ENCODE measurements at regions of chr6 and their contacts with region 1.

Region 1: GRCh38 chr6:73520688-73521350 is at the start of gene EEF1A1:
- DNase-seq: peak; percentile 98
- ATAC-seq: peak; percentile 79
- H3K4me3 ChIP-seq: peak within 1 kb of the TSS; percentile 78 to 100 (median 97)
- H3K27ac ChIP-seq: peak within 1 kb of the TSS; percentile 100
- H3K4me1 ChIP-seq: peaks cover 46% of the 10 kb centered on the region
- H3K27me3 ChIP-seq: no peaks in the 10 kb centered on the region; a peak in 1 of 5 replicates
- CTCF ChIP-seq: peak; percentile 35
- EP300 ChIP-seq: peak in 1 of 2 experiments; percentile 36; a peak in 1 of 4 replicates
- POLR2A ChIP-seq: peak; percentile 100
- RAD21 ChIP-seq: no peak
- total RNA-seq, gene EEF1A1: 13,726 and 19,145 TPM in 2 replicates

Region 2: DNA sequence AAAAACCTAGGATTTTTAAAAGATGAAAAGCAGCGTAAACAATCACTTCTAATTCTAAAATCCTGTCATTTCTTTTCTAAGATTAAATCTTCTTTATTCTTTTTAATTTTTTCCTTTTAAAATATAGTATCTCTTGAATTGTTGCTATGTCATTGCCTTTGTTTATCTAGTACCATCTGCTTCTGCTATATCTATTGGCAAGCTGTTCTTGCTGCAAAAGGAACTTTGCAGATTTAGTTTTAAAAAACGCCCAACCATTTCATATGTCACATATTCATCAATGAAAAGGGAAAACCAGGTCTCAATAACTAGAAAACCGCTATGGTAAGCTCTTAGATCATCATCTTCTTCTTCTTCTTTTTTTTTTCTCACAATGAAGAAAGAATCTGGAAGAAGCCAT is 11.5 kb after region 1 on chr6:
- CTCF ChIA-PET with region 1: no interaction called
- POLR2A ChIA-PET with region 1: interaction called, 11 read pairs
- in situ Hi-C with region 1: no loop called
- intact Hi-C with region 1: no loop called
- DNase-seq: no peak
- ATAC-seq: no peak
- H3K4me3 ChIP-seq: no peak overlapping the region
- H3K27ac ChIP-seq: no peak overlapping the region
- H3K4me1 ChIP-seq: peaks cover 15% of the 10 kb centered on the region
- H3K27me3 ChIP-seq: no peaks in the 10 kb centered on the region
- CTCF ChIP-seq: no peak
- EP300 ChIP-seq: no peak
- POLR2A ChIP-seq: no peak
- RAD21 ChIP-seq: no peak

Region 3: DNA sequence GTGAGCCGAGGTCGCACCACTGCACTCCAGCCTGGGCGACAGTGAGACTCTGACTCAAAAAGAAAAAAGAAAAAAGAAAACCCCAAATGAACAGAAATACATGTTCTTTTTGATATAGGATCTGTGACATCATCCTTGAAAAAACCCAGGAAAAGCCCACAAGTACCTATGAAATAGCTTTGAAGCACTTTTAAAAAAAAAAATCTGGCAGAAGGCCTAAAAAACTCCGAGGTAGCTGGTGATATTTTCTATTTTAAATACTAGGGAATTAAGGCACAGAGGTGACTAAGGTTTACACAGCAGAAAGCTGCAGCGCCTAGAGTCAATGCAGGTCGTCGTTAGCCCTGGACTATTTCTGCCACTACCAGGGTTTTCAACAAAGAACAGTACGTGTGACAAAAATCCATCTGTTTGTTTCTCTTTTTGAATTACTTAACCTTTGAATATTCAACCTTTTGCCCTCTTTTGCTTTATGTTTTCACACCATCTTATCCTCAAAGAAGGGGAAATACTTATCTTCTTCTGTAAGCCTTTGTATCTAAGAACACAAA is 39.4 kb after region 1 on chr6:
- CTCF ChIA-PET with region 1: no interaction called
- POLR2A ChIA-PET with region 1: interaction called, 130 read pairs
- in situ Hi-C with region 1: no loop called
- intact Hi-C with region 1: loop called (anchors 5 kb)
- DNase-seq: peak; percentile 83
- ATAC-seq: peak; percentile 93
- H3K4me3 ChIP-seq: peak overlapping the region in 1 of 3 experiments; percentile 28; a peak in 1 of 6 replicates
- H3K27ac ChIP-seq: peak overlapping the region; percentile 53
- H3K4me1 ChIP-seq: peaks cover 60% of the 10 kb centered on the region
- H3K27me3 ChIP-seq: no peaks in the 10 kb centered on the region
- CTCF ChIP-seq: no peak
- EP300 ChIP-seq: peak in 1 of 2 experiments; percentile 64; a peak in 2 of 4 replicates
- POLR2A ChIP-seq: no peak
- RAD21 ChIP-seq: no peak

Region 4: GRCh38 chr6:73580247-73581149 is 59.7 kb after region 1 on chr6:
- CTCF ChIA-PET with region 1: no interaction called
- POLR2A ChIA-PET with region 1: interaction called, 113 read pairs
- in situ Hi-C with region 1: loop called (anchors 10 kb)
- intact Hi-C with region 1: loop called (anchors 1 kb)
- DNase-seq: peak; percentile 93
- ATAC-seq: peak; percentile 96
- H3K4me3 ChIP-seq: peak overlapping the region; percentile 45 to 67 (median 63)
- H3K27ac ChIP-seq: peak overlapping the region; percentile 99
- H3K4me1 ChIP-seq: peaks cover 50% of the 10 kb centered on the region
- H3K27me3 ChIP-seq: no peaks in the 10 kb centered on the region; a peak in 1 of 5 replicates
- CTCF ChIP-seq: peak; percentile 70
- EP300 ChIP-seq: peak in 1 of 2 experiments; percentile 83; a peak in 1 of 4 replicates
- POLR2A ChIP-seq: 0 out of 4 replicates have a peak, but pooled peaks of 1 of the 2 experiments have one; percentile 30
- RAD21 ChIP-seq: peak; percentile 55; the same call in 1 of the 2 replicates

Region 5: GRCh38 chr6:73610444-73611275 is 89.8 kb after region 1 on chr6:
- CTCF ChIA-PET with region 1: interaction called, 13 read pairs
- POLR2A ChIA-PET with region 1: interaction called, 16 read pairs
- in situ Hi-C with region 1: loop called (anchors 5 kb)
- intact Hi-C with region 1: no loop called
- DNase-seq: peak; percentile 52
- ATAC-seq: peak; percentile 51; the same call in 2 of the 3 replicates
- H3K4me3 ChIP-seq: no peak overlapping the region
- H3K27ac ChIP-seq: no peak overlapping the region
- H3K4me1 ChIP-seq: peaks cover 17% of the 10 kb centered on the region
- H3K27me3 ChIP-seq: no peaks in the 10 kb centered on the region
- CTCF ChIP-seq: peak; percentile 57
- EP300 ChIP-seq: no peak
- POLR2A ChIP-seq: no peak
- RAD21 ChIP-seq: peak; percentile 65